Breast epithelium (tissue), 4 donors: ENCODE measurements at regions of chr5 and their contacts with region 1.

Region 1: DNA sequence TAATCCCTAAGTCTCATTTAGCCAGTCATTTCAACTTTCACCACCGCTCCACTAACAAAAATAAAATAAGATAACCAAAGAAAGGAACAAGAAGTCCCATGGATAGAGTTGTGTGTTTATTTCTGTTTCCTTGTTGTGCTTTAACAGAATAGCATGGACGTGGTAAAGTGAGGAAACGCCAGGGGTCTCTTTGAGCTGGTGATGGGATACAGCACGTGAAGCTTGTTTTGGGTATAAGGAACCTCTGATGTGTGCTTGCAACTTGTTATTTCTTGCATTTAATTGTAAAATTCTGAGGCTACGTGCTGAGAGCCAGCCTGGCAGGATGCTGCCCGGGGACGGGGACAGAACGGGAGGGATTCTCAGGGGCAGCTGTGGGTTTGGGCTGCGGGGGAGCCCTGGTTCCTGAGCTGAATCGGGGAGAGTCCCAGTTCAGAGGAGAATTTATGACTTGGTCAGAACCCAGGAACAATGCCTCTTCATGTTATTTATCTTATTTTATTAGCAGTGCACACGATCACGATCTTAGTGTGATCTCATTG is 63.4 kb downstream of the ANKRD33B start:
- DNase-seq: no peak
- H3K4me3 ChIP-seq: peak overlapping the region; percentile 12 to 47 (median 37)
- H3K27ac ChIP-seq: peak overlapping the region; percentile 41 to 67
- H3K4me1 ChIP-seq: no peaks in the 10 kb centered on the region
- H3K27me3 ChIP-seq: no peaks in the 10 kb centered on the region
- CTCF ChIP-seq: no peak
- POLR2A ChIP-seq: no peak

Region 2: GRCh38 chr5:9622971-9623421 is 1004.2 kb before region 1 on chr5:
- intact Hi-C with region 1: no loop called
- DNase-seq: no peak
- H3K4me3 ChIP-seq: no peak overlapping the region
- H3K27ac ChIP-seq: no peak overlapping the region
- H3K4me1 ChIP-seq: no peaks in the 10 kb centered on the region
- H3K27me3 ChIP-seq: no peaks in the 10 kb centered on the region
- CTCF ChIP-seq: no peak
- POLR2A ChIP-seq: no peak

Region 3: DNA sequence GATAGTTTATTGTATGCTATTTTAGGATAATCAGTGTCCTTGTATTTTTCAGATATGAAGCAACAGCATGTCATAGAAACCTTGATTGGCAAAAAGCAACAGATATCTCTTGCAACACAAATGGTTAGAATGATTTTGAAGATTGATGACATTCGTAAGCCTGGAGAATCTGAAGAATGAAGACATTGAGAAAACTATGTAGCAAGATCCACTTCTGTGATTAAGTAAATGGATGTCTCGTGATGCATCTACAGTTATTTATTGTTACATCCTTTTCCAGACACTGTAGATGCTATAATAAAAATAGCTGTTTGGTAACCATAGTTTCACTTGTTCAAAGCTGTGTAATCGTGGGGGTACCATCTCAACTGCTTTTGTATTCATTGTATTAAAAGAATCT is 362.6 kb before region 1 on chr5:
- intact Hi-C with region 1: loop called (anchors 2 kb)
- DNase-seq: no peak
- H3K4me3 ChIP-seq: no peak overlapping the region
- H3K27ac ChIP-seq: no peak overlapping the region
- H3K4me1 ChIP-seq: no peaks in the 10 kb centered on the region
- H3K27me3 ChIP-seq: no peaks in the 10 kb centered on the region
- CTCF ChIP-seq: no peak
- POLR2A ChIP-seq: no peak

Region 4: DNA sequence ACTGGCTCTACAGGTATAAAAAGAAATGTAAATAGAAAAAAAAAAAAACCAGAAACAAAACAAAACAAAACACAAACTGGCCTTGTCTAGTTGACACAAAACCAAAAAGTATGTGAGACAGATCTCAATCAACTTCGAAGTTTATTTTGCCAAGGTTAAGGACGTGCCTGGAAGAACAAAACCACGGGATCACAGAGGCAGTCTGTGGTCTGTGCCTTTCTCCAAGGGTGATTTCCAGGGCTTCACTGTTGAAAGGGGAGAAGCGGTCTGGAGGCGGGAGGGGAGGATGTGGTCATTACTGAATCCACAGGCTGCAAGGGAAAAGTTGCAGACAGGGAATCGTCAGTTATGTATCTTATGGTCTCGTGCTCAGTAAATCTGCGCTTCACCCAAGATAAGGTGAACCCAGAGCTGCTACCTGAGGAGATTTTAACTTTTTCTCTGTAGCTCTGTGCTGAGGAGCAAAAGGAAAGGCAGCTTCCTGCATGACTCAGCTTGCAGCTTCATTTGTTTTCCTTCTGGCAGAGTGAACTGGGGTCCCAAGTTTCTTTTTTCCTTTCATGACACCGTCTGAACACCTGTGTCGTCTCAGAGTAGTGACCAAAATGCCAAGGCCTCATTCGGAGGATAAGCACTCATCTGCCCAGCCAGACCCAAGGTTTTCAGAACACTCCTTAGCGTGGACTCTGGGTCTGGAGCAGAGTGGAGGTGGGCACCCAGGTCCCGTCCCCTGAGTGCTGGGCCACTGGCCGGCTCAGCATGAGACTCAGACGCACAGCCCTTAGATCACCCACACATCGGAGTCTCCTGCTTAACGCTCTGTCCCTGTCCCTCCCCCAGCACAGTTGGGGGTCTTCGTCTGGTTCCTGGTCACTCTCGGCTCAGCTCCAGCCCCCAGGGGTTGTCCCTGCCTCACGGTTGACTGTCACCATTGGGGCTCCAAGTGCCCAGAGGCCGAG is 159.7 kb before region 1 on chr5:
- intact Hi-C with region 1: loop called (anchors 10 kb)
- DNase-seq: no peak
- H3K4me3 ChIP-seq: no peak overlapping the region
- H3K27ac ChIP-seq: peak overlapping the region in 1 of 2 donors; percentile 40
- H3K4me1 ChIP-seq: no peaks in the 10 kb centered on the region
- H3K27me3 ChIP-seq: no peaks in the 10 kb centered on the region
- CTCF ChIP-seq: no peak
- POLR2A ChIP-seq: no peak

Region 5: GRCh38 chr5:10555277-10555682 is 72.0 kb before region 1 on chr5:
- intact Hi-C with region 1: no loop called
- DNase-seq: no peak
- H3K4me3 ChIP-seq: no peak overlapping the region
- H3K27ac ChIP-seq: no peak overlapping the region
- H3K4me1 ChIP-seq: no peaks in the 10 kb centered on the region
- H3K27me3 ChIP-seq: no peaks in the 10 kb centered on the region
- CTCF ChIP-seq: no peak
- POLR2A ChIP-seq: no peak

Region 6: GRCh38 chr5:10649666-10650380 is 22.6 kb after region 1 on chr5:
- intact Hi-C with region 1: no loop called
- DNase-seq: no peak
- H3K4me3 ChIP-seq: no peak overlapping the region
- H3K27ac ChIP-seq: no peak overlapping the region
- H3K4me1 ChIP-seq: no peaks in the 10 kb centered on the region
- H3K27me3 ChIP-seq: peaks cover 0 to 12% of the 10 kb centered on the region in 2 donors
- CTCF ChIP-seq: no peak
- POLR2A ChIP-seq: no peak

Region 7: DNA sequence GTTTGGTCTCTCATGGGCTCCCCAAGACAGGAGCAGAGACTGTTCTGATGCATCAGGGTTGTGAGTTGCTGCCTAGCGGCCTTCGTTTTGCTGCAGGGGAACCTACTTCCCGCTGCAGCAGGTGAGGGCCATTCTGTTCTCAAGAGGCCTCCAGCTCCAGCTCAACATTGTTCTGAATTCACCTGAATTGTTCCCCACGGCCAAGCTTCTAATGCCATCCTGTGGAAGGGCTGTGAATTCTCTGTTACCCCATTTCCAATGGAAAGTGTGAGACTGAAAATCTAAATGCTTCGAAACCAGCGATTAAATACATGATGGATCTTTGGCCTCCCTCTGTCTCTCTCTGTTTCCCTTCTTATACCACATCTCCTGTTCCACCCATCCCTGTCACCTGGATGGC is 482.9 kb after region 1 on chr5:
- intact Hi-C with region 1: no loop called
- DNase-seq: no peak
- H3K4me3 ChIP-seq: no peak overlapping the region
- H3K27ac ChIP-seq: no peak overlapping the region
- H3K4me1 ChIP-seq: no peaks in the 10 kb centered on the region
- H3K27me3 ChIP-seq: no peaks in the 10 kb centered on the region
- CTCF ChIP-seq: no peak
- POLR2A ChIP-seq: no peak